Activated B cell treated with CpG ODN at 0.5 μM for 24 hours (primary cell): ENCODE measurements at regions of chr4 and their contacts with region 1.

Region 1: DNA sequence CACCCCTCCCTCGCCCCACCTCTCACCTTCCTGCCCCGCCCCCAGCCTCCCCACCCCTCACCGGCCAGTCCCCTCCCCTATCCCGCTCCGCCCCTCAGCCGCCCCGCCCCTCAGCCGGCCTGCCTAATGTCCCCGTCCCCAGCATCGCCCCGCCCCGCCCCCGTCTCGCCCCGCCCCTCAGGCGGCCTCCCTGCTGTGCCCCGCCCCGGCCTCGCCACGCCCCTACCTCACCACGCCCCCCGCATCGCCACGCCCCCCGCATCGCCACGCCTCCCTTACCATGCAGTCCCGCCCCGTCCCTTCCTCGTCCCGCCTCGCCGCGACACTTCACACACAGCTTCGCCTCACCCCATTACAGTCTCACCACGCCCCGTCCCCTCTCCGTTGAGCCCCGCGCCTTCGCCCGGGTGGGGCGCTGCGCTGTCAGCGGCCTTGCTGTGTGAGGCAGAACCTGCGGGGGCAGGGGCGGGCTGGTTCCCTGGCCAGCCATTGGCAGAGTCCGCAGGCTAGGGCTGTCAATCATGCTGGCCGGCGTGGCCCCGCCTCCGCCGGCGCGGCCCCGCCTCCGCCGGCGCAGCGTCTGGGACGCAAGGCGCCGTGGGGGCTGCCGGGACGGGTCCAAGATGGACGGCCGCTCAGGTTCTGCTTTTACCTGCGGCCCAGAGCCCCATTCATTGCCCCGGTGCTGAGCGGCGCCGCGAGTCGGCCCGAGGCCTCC is at the starts of genes HTT and HTT-AS:
- DNase-seq: peak; percentile 93
- ATAC-seq: peak; percentile 77
- H3K4me3 Mint-ChIP-seq: peak within 1 kb of the TSS; percentile 92
- H3K27ac Mint-ChIP-seq: peak within 1 kb of the TSS; percentile 95
- H3K4me1 Mint-ChIP-seq: peaks cover 39% of the 10 kb centered on the region
- H3K27me3 Mint-ChIP-seq: no peaks in the 10 kb centered on the region
- CTCF ChIP-seq: no peak
- total RNA-seq, gene HTT: 239 and 242 TPM in 2 replicates
- total RNA-seq, gene HTT-AS: not detected in 2 replicates

Region 2: DNA sequence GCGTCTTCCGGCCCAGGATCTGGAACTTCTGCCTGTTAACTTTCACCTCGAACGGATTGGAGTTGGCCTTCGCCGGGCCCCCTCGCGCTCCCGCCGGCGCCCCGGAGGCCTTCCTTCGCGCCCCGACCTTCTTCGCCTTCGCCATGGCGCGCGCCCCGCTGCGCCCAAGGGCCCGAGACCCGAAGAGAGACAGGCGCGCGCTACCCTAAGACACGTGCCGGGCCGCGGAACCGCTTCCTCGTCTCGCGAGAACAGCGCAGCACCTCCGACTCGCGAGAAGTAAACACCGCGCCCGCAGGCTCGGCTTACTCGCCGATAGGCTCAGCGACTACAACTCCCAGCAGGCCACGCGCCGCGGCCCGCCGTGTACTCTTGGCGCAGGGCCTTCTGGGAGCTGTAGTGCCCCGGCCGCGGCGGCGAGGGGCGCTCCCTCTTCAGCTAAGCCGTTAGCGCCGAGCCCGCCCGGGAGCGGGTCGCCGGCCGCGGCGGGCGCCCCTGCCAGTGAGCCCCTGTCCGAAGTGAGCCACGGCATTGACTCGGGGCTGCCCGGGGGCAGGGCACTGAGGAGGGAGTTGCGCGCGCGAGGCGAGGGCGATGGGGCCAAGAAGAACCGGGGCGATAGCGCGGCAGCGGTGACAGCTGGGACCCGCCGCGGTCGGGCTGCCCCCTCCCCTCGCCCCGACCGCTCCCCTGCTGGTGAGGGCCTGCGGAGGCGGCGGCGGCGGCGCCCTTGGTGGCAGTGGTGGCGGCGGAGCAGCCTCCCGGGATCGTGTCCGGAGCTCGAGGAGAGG is 110.9 kb before region 1 on chr4 and contains the starts of genes GRK4 and NOP14:
- CTCF ChIA-PET with region 1: no interaction called
- POLR2A ChIA-PET with region 1: interaction called, 3 read pairs
- intact Hi-C with region 1: loop called (anchors 1 kb)
- DNase-seq: peak; percentile 89
- ATAC-seq: peak; percentile 91
- H3K4me3 Mint-ChIP-seq: peak within 1 kb of the TSS; percentile 91
- H3K27ac Mint-ChIP-seq: peak within 1 kb of the TSS; percentile 92
- H3K4me1 Mint-ChIP-seq: peaks cover 29% of the 10 kb centered on the region
- H3K27me3 Mint-ChIP-seq: no peaks in the 10 kb centered on the region
- CTCF ChIP-seq: no peak
- total RNA-seq, gene GRK4: 1.4 and 2.1 TPM in 2 replicates
- total RNA-seq, gene NOP14: 56.3 and 57.3 TPM in 2 replicates

Region 3: DNA sequence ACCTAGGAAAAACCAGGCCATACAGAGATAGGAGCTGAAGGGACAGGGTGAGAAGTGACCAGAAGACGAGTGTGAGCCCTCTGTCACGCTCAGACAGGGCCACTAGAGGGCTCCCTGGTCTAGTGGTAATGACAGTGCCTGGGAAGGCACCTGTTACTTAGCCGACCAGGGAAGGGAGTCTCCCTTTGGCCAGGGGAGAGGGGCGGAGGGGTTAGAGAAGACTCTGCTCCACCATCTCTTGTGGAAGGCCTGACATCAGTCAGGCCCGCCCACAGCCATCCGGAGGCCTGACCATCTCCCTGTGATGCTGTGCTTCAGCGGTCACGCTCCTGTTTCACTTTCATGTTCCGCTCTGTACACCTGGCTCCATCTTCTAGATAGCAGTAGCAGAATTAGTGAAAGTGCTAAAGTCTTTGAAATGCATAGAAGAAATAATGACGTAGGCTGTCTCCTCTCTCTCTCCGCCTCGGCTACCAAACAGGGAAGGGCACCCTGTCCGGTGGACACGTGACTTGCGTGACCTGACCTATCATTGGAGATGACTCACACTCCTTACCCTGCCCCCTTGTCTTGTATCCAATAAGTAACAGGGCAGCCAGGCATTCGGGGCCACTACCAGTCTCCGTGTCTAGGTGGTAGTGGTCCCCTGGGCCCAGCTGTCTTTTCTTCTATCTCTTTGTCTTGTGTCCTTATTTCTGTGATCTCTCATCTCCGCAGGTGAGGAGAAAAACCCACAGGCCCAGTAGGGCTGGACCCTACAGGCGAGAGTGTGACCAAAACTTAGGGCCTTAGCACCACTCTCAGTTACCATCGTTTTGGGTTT is 26.6 kb before region 1 on chr4:
- CTCF ChIA-PET with region 1: interaction called, 3 read pairs
- POLR2A ChIA-PET with region 1: interaction called, 25 read pairs
- intact Hi-C with region 1: loop called (anchors 1 kb)
- DNase-seq: peak; percentile 75
- ATAC-seq: peak; percentile 92
- H3K4me3 Mint-ChIP-seq: peak overlapping the region; percentile 47
- H3K27ac Mint-ChIP-seq: peak overlapping the region; percentile 95
- H3K4me1 Mint-ChIP-seq: peaks cover 52% of the 10 kb centered on the region
- H3K27me3 Mint-ChIP-seq: no peaks in the 10 kb centered on the region
- CTCF ChIP-seq: no peak

Region 4: GRCh38 chr4:3085948-3086655 is 11.9 kb after region 1 on chr4:
- CTCF ChIA-PET with region 1: no interaction called
- POLR2A ChIA-PET with region 1: interaction called, 3 read pairs
- intact Hi-C with region 1: loop called (anchors 1 kb)
- DNase-seq: no peak
- ATAC-seq: no peak
- H3K4me3 Mint-ChIP-seq: no peak overlapping the region
- H3K27ac Mint-ChIP-seq: no peak overlapping the region
- H3K4me1 Mint-ChIP-seq: peaks cover 44% of the 10 kb centered on the region
- H3K27me3 Mint-ChIP-seq: no peaks in the 10 kb centered on the region
- CTCF ChIP-seq: no peak

Region 5: DNA sequence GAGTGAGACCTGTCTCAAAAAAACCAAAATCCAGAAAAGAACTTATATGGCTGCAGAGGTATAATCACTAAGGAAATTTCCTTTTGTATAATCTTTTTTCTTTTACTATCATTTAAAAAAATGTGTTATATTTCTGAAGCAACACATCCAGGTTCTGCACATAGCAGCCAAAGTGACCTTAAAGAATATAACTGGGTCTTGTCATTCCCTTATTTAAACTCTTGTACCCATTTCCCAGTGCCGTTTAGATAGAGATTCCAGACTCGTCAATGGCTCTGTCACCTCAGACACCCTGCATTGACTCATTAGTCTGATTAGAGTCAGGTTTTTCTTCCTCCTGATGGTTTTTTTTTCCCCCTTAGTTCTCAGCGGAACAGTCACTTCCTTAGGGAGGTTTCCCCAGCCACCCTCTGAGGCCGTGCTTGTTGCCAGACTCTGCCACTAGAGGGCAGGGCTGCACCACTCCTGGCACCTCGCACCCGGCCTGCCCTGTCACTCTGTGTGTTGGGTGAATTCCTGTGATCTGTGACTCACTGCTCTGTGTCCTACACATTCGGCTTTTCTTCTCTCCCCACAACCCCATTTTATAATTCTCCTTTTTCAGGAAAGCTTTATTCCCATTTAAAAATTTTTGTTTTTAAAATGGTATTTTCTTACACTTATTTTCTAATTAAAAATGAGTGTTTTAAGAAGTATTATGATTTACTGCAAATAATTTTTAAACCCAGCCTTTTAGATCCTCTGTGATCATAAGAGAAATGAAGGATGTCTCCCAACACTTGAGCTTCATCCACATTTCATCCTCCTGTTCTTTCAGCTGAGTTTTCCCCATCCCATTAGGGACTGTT is 32.3 kb after region 1 on chr4:
- CTCF ChIA-PET with region 1: no interaction called
- POLR2A ChIA-PET with region 1: interaction called, 4 read pairs
- intact Hi-C with region 1: loop called (anchors 1 kb)
- DNase-seq: peak; percentile 81
- ATAC-seq: peak; percentile 100
- H3K4me3 Mint-ChIP-seq: no peak overlapping the region
- H3K27ac Mint-ChIP-seq: peak overlapping the region; percentile 73
- H3K4me1 Mint-ChIP-seq: peaks cover 9% of the 10 kb centered on the region
- H3K27me3 Mint-ChIP-seq: no peaks in the 10 kb centered on the region
- CTCF ChIP-seq: no peak

Region 6: GRCh38 chr4:3388471-3389232 is 314.4 kb after region 1 on chr4:
- CTCF ChIA-PET with region 1: no interaction called
- POLR2A ChIA-PET with region 1: interaction called, 4 read pairs
- intact Hi-C with region 1: loop called (anchors 5 kb)
- DNase-seq: no peak
- ATAC-seq: peak; percentile 72
- H3K4me3 Mint-ChIP-seq: peak overlapping the region; percentile 83
- H3K27ac Mint-ChIP-seq: peak overlapping the region; percentile 95
- H3K4me1 Mint-ChIP-seq: peaks cover 51% of the 10 kb centered on the region
- H3K27me3 Mint-ChIP-seq: peaks cover 5% of the 10 kb centered on the region
- CTCF ChIP-seq: no peak

Region 7: GRCh38 chr4:3765271-3766040 is 691.2 kb after region 1 on chr4:
- CTCF ChIA-PET with region 1: no interaction called
- POLR2A ChIA-PET with region 1: no interaction called
- intact Hi-C with region 1: no loop called
- DNase-seq: no peak
- ATAC-seq: no peak
- H3K4me3 Mint-ChIP-seq: no peak overlapping the region
- H3K27ac Mint-ChIP-seq: no peak overlapping the region
- H3K4me1 Mint-ChIP-seq: peaks cover 6% of the 10 kb centered on the region
- H3K27me3 Mint-ChIP-seq: peaks cover 23% of the 10 kb centered on the region
- CTCF ChIP-seq: no peak